ENCODE measurements at regions of chr2 and their contacts with region 1.

Region 1: GRCh38 chr2:202375609-202376408 is at the start of gene BMPR2:
- DNase-seq: peak; percentile 61
- H3K4me3 ChIP-seq: peak within 1 kb of the TSS; percentile 77
- H3K27me3 ChIP-seq: no peaks in the 10 kb centered on the region
- CTCF ChIP-seq: no peak
- polyA plus RNA-seq, gene BMPR2: 30.9 and 54.3 TPM in 2 replicates

Region 2: DNA sequence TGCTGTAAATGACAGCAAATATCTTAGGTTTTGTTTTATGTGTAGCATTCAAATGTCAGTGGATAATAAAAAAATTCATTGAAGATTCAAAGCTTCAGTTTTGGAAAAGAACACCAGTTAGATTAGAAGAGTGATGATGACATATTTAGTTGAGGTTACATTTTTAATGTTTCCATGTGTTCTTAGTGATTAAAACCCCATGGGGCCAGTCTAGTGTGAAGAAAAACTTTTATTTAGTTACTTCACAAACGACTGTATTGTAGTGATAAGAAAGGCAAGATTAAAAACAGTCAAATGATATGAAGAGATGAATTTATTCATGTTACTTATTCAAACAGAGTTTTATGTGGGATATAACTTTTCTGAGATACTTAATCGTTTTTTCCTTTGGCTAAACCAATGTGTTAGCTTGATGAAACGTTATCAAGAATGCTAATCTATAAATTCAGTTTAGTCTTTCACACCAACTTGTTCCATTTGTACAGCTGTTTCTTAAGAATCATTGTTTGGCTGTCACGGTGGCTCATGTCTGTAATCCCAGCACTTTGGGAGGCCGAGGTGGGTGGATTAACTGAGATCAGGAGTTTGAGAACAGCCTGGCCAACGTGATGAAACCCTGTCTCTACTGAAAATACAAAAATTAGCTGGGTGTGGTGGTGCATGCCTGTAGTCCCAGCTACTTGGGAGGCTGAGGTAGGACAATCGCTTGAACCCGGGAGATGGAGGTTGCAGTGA is 12.0 kb after region 1 on chr2:
- CTCF ChIA-PET with region 1: no interaction called
- POLR2A ChIA-PET with region 1: interaction called, 13 read pairs
- DNase-seq: no peak
- H3K4me3 ChIP-seq: no peak overlapping the region
- H3K27me3 ChIP-seq: no peaks in the 10 kb centered on the region
- CTCF ChIP-seq: no peak